A549 (cell line): ENCODE measurements at regions of chr2 and their contacts with region 1.

Region 1: DNA sequence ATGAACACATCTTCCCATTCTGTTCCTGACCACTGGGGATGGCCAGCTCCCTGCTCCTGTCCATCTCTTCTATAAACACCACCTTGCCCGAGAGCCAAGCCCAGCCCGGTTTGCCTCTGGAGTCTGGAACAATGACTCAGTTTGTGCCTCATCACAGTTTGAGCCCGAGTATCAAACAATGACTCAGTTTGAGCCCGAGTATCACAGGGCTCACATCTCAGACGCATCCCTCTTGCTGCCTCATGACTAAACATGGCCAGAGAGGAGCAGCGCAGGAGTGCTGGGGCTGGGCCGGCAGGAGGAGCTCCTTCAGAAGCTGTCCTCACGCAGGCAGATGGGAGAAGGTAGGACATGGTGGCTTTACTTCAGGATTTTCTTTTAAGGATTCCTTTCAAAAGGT is 68.7 kb downstream of the PXDN start:
- DNase-seq: peak; percentile 80 to 83
- ATAC-seq: peak; percentile 96 to 99
- H3K4me3 ChIP-seq: no peak overlapping the region
- H3K27ac ChIP-seq: peak overlapping the region; percentile 63 to 80
- H3K4me1 ChIP-seq: peaks cover 17% of the 10 kb centered on the region
- CTCF ChIP-seq: peak; percentile 38; the same call in 2 of the 3 replicates
- EP300 ChIP-seq: no peak
- POLR2A ChIP-seq: no peak
- RAD21 ChIP-seq: peak; percentile 24 to 42; a peak in 2 of 5 replicates

Region 2: DNA sequence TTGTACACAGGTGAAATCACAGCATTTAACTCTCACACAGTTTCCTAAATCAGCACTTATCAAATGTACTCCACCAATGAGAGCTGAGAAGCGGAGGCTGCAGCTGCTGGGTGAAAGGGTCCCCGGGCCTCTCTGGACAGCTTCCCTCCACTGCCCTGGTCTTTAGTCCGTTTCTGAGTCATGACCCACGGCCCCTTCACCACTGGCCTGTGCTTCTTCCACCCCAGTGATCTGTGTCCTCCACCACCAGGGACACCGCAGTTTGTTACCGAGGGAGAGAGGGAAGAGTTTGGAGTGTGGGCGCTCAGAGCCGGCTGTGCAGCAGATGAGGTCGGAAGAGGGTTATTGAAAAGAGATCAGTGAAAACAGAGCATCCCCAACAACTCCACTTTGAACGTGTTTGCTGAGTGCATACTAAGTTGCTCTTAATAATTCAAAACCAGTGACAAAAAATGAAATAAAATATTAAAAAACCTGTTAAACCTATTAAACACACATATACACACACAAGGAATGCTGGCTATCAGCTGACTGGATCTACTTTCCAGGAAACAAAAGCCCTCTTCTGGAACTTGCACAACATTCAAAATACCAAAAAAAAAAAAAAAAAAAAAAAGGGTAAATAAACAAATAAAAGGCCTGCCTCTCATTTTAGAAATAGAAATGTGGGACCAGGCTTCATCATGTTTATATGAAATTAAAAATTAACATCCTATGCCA is 14.6 kb after region 1 on chr2:
- CTCF ChIA-PET with region 1: interaction called, 13 read pairs
- POLR2A ChIA-PET with region 1: no interaction called
- DNase-seq: no peak
- ATAC-seq: no peak
- H3K4me3 ChIP-seq: no peak overlapping the region
- H3K27ac ChIP-seq: no peak overlapping the region
- H3K4me1 ChIP-seq: 0 out of 3 replicates have a peak, but pooled peaks cover 5% of the 10 kb centered on the region
- CTCF ChIP-seq: no peak
- EP300 ChIP-seq: no peak
- POLR2A ChIP-seq: no peak
- RAD21 ChIP-seq: no peak

Region 3: GRCh38 chr2:1742681-1743395 is 67.2 kb after region 1 on chr2:
- CTCF ChIA-PET with region 1: interaction called, 14 read pairs
- POLR2A ChIA-PET with region 1: no interaction called
- DNase-seq: peak; percentile 58 to 67
- ATAC-seq: peak; percentile 60 to 74; a peak in 5 of 6 replicates
- H3K4me3 ChIP-seq: peak overlapping the region; percentile 59
- H3K27ac ChIP-seq: peak overlapping the region; percentile 65 to 82; a peak in 5 of 6 replicates
- H3K4me1 ChIP-seq: peaks cover 11% of the 10 kb centered on the region; the same call in 1 of the 3 replicates
- CTCF ChIP-seq: peak; percentile 38
- EP300 ChIP-seq: no peak
- POLR2A ChIP-seq: no peak
- RAD21 ChIP-seq: peak; percentile 56 to 64

Region 4: DNA sequence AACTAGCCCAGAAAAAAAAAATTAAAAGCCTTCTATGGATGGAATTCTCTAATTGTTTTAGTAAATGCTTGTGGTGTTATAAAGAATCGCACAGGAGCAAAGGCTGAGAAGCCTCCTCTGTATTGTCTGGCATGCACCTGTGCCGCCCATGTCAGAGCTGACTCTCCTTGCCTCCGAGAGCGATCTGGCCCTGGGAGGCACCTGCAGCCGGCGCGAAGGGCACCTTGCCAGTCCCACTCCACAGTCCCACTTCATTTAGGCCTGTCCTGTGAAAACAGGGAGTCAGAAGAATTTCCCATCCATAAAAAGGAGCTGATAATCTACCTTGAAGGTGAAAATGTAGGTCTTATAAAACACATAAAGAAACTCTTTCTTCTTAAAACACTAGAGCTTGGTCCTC is 239.6 kb after region 1 on chr2:
- CTCF ChIA-PET with region 1: no interaction called
- POLR2A ChIA-PET with region 1: no interaction called
- DNase-seq: no peak
- ATAC-seq: no peak
- H3K4me3 ChIP-seq: no peak overlapping the region
- H3K27ac ChIP-seq: no peak overlapping the region
- H3K4me1 ChIP-seq: no peaks in the 10 kb centered on the region
- CTCF ChIP-seq: no peak
- EP300 ChIP-seq: no peak
- POLR2A ChIP-seq: no peak
- RAD21 ChIP-seq: no peak